ENCODE measurements at regions of chr16 and their contacts with region 1.

Region 1: GRCh38 chr16:69166221-69166833 is 20.6 kb upstream of the SNTB2 start:
- DNase-seq: peak; percentile 46
- H3K4me3 Mint-ChIP-seq: peak overlapping the region; percentile 69
- H3K27ac Mint-ChIP-seq: peak overlapping the region; percentile 89
- H3K4me1 Mint-ChIP-seq: peaks cover 49% of the 10 kb centered on the region
- H3K27me3 Mint-ChIP-seq: no peaks in the 10 kb centered on the region

Region 2: GRCh38 chr16:69132424-69133252 is 33.7 kb before region 1 on chr16 and contains the starts of genes CHTF8 and UTP4:
- intact Hi-C with region 1: loop called (anchors 1 kb)
- DNase-seq: peak; percentile 88
- H3K4me3 Mint-ChIP-seq: peak within 1 kb of the TSS; percentile 97
- H3K27ac Mint-ChIP-seq: peak within 1 kb of the TSS; percentile 92
- H3K4me1 Mint-ChIP-seq: peaks cover 49% of the 10 kb centered on the region
- H3K27me3 Mint-ChIP-seq: no peaks in the 10 kb centered on the region
- total RNA-seq, gene CHTF8: 134 and 143 TPM in 2 replicates
- total RNA-seq, gene UTP4: 117 and 127 TPM in 2 replicates

Region 3: GRCh38 chr16:69150146-69150865 is 16.0 kb before region 1 on chr16:
- intact Hi-C with region 1: no loop called
- DNase-seq: peak; percentile 34
- H3K4me3 Mint-ChIP-seq: no peak overlapping the region
- H3K27ac Mint-ChIP-seq: no peak overlapping the region
- H3K4me1 Mint-ChIP-seq: no peaks in the 10 kb centered on the region
- H3K27me3 Mint-ChIP-seq: no peaks in the 10 kb centered on the region

Region 4: DNA sequence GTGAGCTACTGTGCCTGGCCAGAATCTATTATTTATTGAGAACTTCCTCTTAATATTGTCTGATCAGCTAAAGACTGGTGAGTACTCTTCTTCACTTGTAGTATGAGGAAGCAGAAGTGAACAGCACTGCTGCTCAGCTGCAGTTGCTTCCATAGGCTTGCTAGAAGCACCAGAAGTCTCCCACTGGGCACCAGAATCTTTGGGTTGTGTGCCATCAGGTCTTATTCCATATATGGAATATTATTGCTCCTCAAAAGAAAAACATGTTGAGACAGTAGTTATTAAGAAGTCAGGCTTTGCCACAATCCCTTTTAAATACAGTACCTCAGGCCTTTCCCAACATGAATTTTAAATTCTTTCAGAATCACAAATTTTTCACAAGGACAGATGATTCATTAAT is 37.8 kb after region 1 on chr16:
- intact Hi-C with region 1: loop called (anchors 1 kb)
- DNase-seq: no peak
- H3K4me3 Mint-ChIP-seq: no peak overlapping the region
- H3K27ac Mint-ChIP-seq: peak overlapping the region; percentile 82
- H3K4me1 Mint-ChIP-seq: peaks cover 27% of the 10 kb centered on the region
- H3K27me3 Mint-ChIP-seq: no peaks in the 10 kb centered on the region

Region 5: DNA sequence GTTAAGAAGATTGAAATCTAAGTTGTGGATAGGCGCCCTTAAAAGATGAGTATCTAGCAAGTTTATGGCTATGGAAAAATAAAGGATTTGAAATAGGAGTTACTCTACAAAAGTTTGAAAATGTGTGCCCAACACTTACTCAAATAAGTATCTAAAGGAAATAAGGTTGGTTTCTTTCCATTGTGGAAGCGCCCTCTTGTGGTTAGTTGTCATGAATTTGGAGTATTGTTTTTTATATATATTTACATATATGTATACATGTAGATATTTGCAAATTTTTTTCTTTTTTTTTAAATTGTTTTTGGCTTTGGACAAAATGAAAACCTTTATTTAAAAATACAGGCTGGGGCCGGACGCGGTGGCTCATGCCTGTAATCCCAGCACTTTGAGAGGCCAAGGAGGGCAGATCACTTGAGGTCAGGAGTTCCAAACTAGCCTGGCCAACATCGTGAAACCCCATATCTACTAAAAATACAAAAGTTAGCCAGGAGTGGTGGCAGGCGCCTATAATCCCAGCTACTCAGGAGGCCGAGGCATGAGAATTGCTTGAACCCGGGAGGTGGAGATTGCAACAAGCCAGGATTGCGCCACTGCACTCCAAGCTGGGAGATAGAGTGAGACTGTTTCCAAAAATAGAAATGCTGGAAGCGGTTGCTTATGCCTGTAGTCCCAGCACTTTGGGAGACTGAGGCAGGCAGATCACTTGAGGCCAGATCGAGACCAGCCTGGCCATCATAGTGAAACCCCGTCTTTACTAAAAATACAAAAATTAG is 120.8 kb after region 1 on chr16:
- intact Hi-C with region 1: loop called (anchors 5 kb)
- DNase-seq: peak; percentile 12
- H3K4me3 Mint-ChIP-seq: no peak overlapping the region
- H3K27ac Mint-ChIP-seq: no peak overlapping the region
- H3K4me1 Mint-ChIP-seq: peaks cover 5% of the 10 kb centered on the region
- H3K27me3 Mint-ChIP-seq: no peaks in the 10 kb centered on the region